Activated B cell treated with CpG ODN at 0.5 μM for 24 hours (primary cell): ENCODE measurements at regions of chr2 and their contacts with region 1.

Region 1: GRCh38 chr2:145739681-145740080 is 1219.8 kb upstream of the ZEB2 start:
- DNase-seq: no peak
- ATAC-seq: peak; percentile 15
- H3K4me3 Mint-ChIP-seq: no peak overlapping the region
- H3K27ac Mint-ChIP-seq: peak overlapping the region; percentile 89
- H3K4me1 Mint-ChIP-seq: peaks cover 59% of the 10 kb centered on the region
- H3K27me3 Mint-ChIP-seq: no peaks in the 10 kb centered on the region
- CTCF ChIP-seq: no peak

Region 2: GRCh38 chr2:145644820-145645302 is 94.8 kb before region 1 on chr2:
- CTCF ChIA-PET with region 1: no interaction called
- POLR2A ChIA-PET with region 1: interaction called, 20 read pairs
- intact Hi-C with region 1: loop called (anchors 2 kb)
- DNase-seq: no peak
- ATAC-seq: peak; percentile 86
- H3K4me3 Mint-ChIP-seq: peak overlapping the region; percentile 70
- H3K27ac Mint-ChIP-seq: peak overlapping the region; percentile 92
- H3K4me1 Mint-ChIP-seq: peaks cover 47% of the 10 kb centered on the region
- H3K27me3 Mint-ChIP-seq: no peaks in the 10 kb centered on the region
- CTCF ChIP-seq: no peak

Region 3: GRCh38 chr2:145724311-145724898 is 15.3 kb before region 1 on chr2:
- CTCF ChIA-PET with region 1: no interaction called
- POLR2A ChIA-PET with region 1: no interaction called
- intact Hi-C with region 1: loop called (anchors 2 kb)
- DNase-seq: no peak
- ATAC-seq: no peak
- H3K4me3 Mint-ChIP-seq: no peak overlapping the region
- H3K27ac Mint-ChIP-seq: no peak overlapping the region
- H3K4me1 Mint-ChIP-seq: peaks cover 14% of the 10 kb centered on the region
- H3K27me3 Mint-ChIP-seq: no peaks in the 10 kb centered on the region
- CTCF ChIP-seq: no peak

Region 4: GRCh38 chr2:146997945-146998344 is 1258.3 kb after region 1 on chr2:
- CTCF ChIA-PET with region 1: no interaction called
- POLR2A ChIA-PET with region 1: no interaction called
- intact Hi-C with region 1: no loop called
- DNase-seq: no peak
- ATAC-seq: no peak
- H3K4me3 Mint-ChIP-seq: no peak overlapping the region
- H3K27ac Mint-ChIP-seq: no peak overlapping the region
- H3K4me1 Mint-ChIP-seq: no peaks in the 10 kb centered on the region
- H3K27me3 Mint-ChIP-seq: no peaks in the 10 kb centered on the region
- CTCF ChIP-seq: no peak